ENCODE measurements at regions of chr11 and their contacts with region 1.

Region 1: DNA sequence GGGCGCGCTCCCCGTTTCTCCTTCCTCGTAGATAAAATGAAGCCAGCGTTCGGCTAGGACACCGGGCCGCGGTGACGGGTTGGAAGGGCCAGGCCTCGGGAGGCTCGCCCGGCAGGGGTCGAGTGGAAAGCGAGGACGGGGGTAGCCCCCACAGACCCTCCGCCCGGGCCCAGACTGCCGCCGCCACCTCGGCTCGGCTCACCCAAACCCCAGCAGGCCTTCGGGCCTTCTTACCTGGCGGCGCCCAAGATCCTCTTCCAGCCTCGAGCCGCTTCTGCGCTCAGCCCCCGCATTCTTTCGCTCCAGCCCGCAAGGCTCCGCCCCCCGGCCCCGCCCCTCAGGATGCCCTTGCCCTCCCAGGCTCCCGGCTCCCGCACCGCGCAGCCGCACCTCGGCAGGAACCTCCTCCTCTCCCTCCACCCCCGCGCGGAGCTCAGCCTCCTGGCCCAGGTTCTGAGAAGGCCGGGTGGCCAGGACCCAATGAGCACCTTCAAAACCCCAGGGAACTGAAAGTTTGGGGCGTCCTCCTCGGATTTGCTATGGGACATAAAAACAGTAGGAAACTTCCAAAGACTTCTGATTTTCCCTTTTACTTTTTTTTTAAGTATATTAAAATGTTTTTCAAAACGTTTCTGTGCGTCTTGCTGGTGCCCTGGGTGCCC is at the start of gene CD59:
- DNase-seq: peak; percentile 98 to 99
- ATAC-seq: peak; percentile 96
- H3K4me3 ChIP-seq: peak within 1 kb of the TSS; percentile 73 to 97
- H3K27ac ChIP-seq: peak within 1 kb of the TSS in 1 of 2 donors; percentile 82
- H3K4me1 ChIP-seq: peaks cover 0 to 3% of the 10 kb centered on the region in 2 donors
- H3K27me3 ChIP-seq: no peaks in the 10 kb centered on the region
- total RNA-seq, gene CD59: 665 to 881 TPM

Region 2: GRCh38 chr11:33687733-33688479 is 48.4 kb before region 1 on chr11:
- intact Hi-C with region 1: loop called in 1 of 2 experiments (anchors 2 kb)
- DNase-seq: no peak
- ATAC-seq: no peak
- H3K4me3 ChIP-seq: no peak overlapping the region
- H3K27ac ChIP-seq: no peak overlapping the region
- H3K4me1 ChIP-seq: peaks cover 0 to 3% of the 10 kb centered on the region in 2 donors
- H3K27me3 ChIP-seq: no peaks in the 10 kb centered on the region

Region 3: DNA sequence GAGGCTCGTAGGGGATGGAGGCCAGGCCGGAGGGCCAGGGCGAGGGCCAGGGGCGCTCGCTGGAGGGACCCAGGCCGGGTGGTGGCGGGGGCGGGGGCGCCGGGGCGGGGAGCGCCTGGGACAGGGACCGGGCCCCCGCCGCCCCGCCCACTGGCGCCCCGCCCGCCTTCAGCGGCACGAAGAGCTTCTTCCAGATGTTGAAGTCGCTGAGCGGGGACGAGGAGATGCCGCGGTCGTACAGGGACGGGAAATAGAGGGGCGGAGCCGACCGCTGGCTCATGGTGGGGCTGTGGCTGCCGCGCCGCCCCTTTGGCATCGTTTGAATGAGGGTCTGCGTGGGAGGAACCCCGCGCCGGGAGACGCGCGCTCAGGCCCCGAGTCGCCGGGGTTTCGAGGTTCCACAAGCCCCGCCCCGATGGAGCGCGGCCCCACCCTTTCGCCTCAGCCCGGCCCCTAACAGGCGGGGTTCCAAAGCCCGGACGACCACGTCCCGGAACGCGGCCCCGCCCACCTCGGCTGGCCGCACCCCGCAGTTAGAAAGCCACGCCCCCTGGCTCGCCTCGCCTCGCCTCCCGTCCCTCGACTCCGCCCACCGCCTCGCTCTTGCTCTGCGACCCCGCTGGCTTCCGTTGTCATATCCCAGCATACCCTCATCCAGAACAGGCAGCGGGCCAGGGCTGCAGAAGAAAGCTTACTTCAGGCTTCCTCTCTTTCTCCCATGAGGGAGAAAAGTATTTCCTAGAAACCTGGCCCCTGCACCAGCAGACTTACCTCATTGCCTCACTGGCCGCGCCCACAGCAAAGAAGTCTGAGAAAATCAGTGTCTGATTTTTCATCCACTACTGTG is 35.6 kb before region 1 on chr11 and contains the start of gene C11orf91:
- intact Hi-C with region 1: loop called (anchors 2 to 5 kb)
- DNase-seq: peak; percentile 97 to 99
- ATAC-seq: peak; percentile 96
- H3K4me3 ChIP-seq: peak within 1 kb of the TSS; percentile 2 to 38
- H3K27ac ChIP-seq: no peak within 1 kb of the TSS
- H3K4me1 ChIP-seq: no peaks in the 10 kb centered on the region
- H3K27me3 ChIP-seq: no peaks in the 10 kb centered on the region
- total RNA-seq, gene C11orf91: 0.97 TPM in 1 of 2 donors, not detected in the other

Region 4: DNA sequence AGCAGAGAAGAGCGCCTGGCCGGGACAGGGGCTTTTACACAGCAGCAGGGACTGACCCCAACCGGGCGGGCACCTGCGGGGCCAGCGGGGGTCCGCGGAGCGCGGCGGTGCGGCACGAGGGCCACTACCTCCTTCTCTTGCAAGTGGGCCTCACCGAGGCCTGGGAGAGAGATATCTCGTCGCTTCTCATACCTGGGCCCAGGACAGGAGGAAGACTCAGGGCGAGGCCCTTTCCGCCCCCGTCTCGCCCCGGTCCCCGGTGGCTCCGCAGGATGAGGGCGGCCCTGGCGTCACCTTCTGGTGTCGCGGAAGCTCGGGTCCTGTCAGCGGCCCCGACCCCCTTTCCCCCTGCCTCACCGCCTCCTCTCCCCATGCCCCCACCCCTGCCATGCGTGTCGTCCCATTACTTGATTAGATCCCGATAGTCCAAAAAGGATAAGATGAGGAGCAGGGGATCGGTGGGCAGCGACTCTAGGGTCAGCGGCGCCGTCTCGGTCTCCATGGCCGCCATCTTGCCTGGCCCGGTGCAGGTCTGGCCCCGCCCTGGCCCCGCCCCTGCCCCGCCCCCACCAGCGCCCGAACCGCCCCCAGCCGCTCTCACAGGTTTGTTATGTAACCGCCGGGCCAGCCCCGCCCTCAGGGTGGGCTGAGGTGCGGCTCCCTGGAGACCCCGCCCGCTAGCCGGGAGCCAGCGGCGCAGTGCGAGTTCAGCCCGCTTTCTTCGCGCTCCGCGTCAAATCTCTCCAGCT is 37.9 kb after region 1 on chr11 and contains the start of gene FBXO3:
- intact Hi-C with region 1: loop called in 1 of 2 experiments (anchors 5 kb)
- DNase-seq: peak; percentile 92 to 94
- ATAC-seq: peak; percentile 97
- H3K4me3 ChIP-seq: peak within 1 kb of the TSS; percentile 75 to 94
- H3K27ac ChIP-seq: peak within 1 kb of the TSS in 1 of 2 donors; percentile 84
- H3K4me1 ChIP-seq: no peaks in the 10 kb centered on the region
- H3K27me3 ChIP-seq: no peaks in the 10 kb centered on the region
- total RNA-seq, gene FBXO3: 33.7 to 35.8 TPM